ENCODE measurements at regions of chr11 and their contacts with region 1.

Region 1: DNA sequence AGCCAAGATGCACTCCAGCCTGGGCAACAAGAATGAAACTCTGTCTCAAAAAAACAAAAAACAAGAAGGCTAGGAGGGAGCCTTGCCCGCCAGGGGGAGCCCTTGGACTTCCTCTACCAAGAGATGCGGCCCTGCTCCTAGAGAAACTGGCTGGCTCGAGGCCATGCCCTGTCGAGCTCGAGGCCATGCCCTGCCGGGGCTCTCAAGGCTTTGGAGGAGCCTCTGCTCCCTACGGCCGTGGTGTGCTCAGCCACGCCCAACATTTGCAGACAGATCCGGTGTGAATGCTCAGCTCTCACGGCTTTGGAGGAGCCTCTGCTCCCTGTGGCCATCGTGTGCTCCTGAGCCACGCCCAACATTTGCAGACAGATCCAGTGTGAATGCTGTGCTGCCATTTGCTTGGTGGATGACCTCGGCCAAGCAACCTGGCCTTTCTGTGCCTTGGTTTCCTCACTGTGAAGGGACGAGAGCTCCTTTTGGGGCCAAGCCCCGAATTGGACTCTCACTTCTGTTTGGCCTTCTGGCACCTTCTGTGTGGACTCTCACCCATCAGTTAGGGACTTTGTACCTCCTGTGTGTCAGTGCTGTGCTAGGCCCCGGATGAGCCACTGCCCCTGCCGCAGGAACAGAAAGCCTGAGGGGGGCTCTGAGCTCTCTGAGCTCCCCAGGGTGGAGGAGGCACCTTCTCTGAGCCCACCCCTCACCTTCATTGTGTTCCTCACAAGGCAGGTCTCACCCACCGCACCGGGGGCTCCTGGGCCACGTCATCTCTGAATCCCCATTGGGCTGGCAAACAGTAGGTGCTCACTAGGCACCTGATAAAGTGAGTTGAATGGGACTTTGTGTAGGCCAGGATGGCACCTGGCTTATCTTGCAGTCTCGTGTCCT is 14.1 kb downstream of the C11orf24 start:
- DNase-seq: peak; percentile 95
- H3K4me3 ChIP-seq: no peak overlapping the region
- H3K27ac ChIP-seq: no peak overlapping the region
- H3K4me1 ChIP-seq: peaks cover 17% of the 10 kb centered on the region
- H3K27me3 ChIP-seq: no peaks in the 10 kb centered on the region
- CTCF ChIP-seq: peak; percentile 85

Region 2: DNA sequence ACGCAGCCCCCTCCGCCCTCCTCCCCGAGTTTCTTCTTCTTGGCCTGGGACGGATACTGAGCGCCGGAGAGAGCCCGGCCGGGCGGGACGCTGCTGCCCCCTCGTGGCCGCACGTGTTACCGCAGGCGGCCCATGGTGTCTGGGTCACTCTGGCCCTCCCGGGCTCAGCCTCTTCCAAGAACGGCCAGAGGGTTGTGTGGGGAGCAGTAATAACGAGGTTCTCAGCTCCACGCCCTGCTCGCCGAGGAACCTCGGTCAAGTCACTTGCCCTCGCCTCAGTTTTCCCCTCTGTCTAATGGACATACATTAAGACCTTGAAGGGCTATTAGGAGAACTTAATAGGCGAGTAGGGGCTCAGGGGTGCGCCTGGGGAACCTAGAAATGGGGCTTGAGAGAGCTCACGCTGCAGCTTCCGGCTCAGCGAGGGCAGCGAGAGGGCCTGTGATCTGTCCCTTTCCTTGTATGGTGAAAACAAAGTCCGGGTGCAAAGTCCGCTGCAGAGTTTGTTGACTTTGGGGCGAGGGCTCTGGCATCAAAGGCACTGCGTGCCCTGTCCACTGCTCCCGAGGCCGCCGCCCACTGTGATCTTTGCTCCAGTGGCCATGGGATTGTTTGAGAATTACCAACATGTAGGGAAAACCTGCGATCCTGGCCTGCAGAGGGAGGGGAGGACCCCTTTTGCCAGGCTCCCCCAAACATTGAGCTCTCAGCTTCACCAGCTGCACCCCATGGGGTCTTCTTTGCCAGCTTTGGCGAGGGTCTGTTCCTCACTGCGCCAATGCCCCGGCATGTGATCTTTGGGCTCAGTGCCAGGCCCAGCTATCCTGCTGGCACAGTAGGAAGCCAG is 40.3 kb after region 1 on chr11:
- CTCF ChIA-PET with region 1: interaction called, 7 read pairs
- POLR2A ChIA-PET with region 1: no interaction called
- intact Hi-C with region 1: loop called (anchors 1 kb)
- DNase-seq: peak; percentile 83
- H3K4me3 ChIP-seq: no peak overlapping the region
- H3K27ac ChIP-seq: no peak overlapping the region
- H3K4me1 ChIP-seq: no peaks in the 10 kb centered on the region
- H3K27me3 ChIP-seq: no peaks in the 10 kb centered on the region
- CTCF ChIP-seq: peak; percentile 100

Region 3: DNA sequence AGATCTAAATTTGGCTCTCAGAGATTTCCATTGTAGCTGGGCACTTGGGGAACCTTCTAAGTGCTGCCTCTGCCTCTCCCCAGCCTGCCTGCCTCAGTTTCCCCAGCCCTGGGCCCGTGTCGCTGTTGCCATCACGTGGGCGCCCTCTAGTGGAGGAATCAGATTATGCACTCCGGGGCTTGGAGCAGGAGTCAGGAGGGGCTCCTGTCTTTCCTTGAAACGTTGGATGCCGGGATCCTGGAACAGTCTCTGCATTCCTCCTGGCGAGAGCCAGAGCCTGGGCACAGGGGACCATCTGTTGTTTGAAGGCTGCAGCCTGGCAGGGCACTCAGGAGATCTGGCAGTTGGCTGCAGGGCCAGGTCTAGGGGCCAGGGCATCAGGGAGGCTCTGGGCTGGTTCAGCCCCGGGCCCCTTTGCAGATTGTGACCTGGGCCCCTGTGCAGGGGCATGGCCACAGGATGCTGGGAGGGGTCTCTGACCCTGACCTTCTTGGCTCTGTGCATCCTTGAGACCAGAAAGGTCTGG is 126.3 kb after region 1 on chr11:
- CTCF ChIA-PET with region 1: interaction called, 3 read pairs
- POLR2A ChIA-PET with region 1: no interaction called
- intact Hi-C with region 1: loop called (anchors 2 kb)
- DNase-seq: peak; percentile 66
- H3K4me3 ChIP-seq: no peak overlapping the region
- H3K27ac ChIP-seq: no peak overlapping the region
- H3K4me1 ChIP-seq: no peaks in the 10 kb centered on the region
- H3K27me3 ChIP-seq: no peaks in the 10 kb centered on the region
- CTCF ChIP-seq: peak; percentile 100

Region 4: DNA sequence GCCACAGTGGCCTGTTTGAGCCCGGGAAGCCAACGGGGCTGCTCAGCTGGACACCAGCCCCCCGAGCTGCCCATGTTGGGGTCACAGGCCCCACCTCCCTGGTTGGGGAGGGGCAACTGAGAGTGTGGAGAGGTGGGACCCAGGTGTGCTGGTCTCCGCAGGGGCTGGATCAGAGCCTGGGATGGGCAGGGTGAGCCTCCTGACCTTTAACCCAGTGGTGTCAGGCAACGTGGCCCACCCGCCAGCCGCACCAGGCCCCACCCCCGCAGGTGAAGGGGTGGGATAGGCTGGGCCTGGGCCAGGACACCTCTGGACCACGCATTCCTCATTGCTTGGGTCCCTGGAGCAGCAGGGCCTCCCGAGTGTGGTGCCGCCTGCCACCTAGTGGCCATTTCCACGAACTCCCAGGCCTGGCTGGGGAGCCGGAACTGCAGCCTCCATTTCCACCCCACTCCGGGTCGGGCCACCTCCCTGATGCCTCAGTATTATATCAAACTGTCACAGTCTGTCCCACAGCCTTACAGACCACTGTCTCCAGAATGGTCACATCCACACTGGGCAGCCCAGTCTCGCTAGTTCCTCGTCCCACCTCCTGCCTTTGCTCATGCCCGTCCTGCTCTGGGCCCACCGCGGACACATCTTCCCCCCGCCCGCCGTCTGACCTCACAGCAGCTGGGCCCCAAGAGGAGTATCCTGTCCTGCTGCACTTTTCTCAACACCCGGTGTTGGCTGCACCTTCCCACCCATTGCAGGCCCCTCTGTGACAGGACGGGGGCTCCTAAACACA is 189.5 kb after region 1 on chr11:
- CTCF ChIA-PET with region 1: interaction called, 5 read pairs
- POLR2A ChIA-PET with region 1: no interaction called
- intact Hi-C with region 1: loop called (anchors 1 kb)
- DNase-seq: peak; percentile 87
- H3K4me3 ChIP-seq: no peak overlapping the region
- H3K27ac ChIP-seq: no peak overlapping the region
- H3K4me1 ChIP-seq: peaks cover 10% of the 10 kb centered on the region
- H3K27me3 ChIP-seq: no peaks in the 10 kb centered on the region
- CTCF ChIP-seq: peak; percentile 97

Measured in A673 (cell line).